ENCODE measurements at regions of chr14 and their contacts with region 1.

Region 1: DNA sequence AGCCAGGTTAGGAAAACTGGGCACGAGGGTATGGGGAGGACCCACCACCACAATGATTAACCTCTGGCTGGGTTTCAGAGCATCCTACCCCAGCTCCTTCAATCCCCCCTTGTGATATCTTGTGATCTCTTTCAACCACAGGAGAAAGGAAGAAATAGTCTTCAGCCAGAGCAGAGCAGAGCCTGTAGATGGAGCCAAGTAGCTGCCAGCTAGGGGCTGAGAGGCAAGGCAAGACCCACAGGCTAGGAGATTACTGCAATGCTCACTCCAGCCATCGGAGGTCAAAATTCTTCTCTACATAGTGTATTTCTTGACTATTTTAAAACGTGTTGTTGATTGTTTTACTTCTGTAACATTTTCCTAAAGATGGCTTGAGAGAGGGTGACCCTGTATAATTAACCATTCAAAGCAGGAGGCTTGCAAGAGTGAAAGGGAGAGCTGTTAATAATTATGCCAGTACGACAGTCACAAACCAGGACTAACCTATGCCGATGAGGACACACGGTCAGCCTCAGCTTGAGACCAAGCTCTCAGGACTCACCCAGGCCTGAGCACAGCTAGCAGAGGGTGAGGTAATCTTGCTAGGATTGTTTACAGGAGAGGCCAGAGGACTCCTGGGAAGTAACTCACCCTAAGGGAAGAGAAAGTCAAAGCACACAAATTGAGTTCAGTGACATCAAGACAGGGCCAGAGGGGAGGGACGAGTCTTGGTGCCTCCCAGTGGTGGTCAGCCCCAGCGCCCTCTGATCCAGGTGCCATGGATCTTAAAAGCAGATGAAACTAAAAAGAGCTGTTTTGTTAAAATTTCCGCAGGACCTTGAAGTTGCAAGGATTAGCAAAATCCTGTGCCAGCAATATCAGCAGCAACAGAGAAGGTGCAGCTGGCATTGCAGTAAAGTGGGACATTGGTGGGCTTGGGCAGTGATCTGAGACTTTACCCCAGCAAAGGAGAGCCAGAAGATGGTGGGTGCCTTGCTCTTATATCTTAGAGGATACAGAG is 29.8 kb upstream of the CDKN3 start:
- DNase-seq: peak; percentile 73 to 84 (median 82)
- H3K4me3 ChIP-seq: no peak overlapping the region
- H3K27ac ChIP-seq: no peak overlapping the region
- H3K4me1 ChIP-seq: peaks cover 0 to 5% (median 4%) of the 10 kb centered on the region in 4 experiments
- H3K27me3 ChIP-seq: no peaks in the 10 kb centered on the region

Region 2: GRCh38 chr14:54396493-54397335 is 29.7 kb after region 1 on chr14 and contains the start of gene CDKN3:
- CTCF ChIA-PET with region 1: interaction called, 16 read pairs
- POLR2A ChIA-PET with region 1: no interaction called
- DNase-seq: peak; percentile 99
- H3K4me3 ChIP-seq: peak within 1 kb of the TSS; percentile 68 to 94 (median 83)
- H3K27ac ChIP-seq: peak within 1 kb of the TSS; percentile 33 to 70
- H3K4me1 ChIP-seq: peaks cover 1 to 29% (median 21%) of the 10 kb centered on the region in 4 experiments
- H3K27me3 ChIP-seq: no peaks in the 10 kb centered on the region

Region 3: DNA sequence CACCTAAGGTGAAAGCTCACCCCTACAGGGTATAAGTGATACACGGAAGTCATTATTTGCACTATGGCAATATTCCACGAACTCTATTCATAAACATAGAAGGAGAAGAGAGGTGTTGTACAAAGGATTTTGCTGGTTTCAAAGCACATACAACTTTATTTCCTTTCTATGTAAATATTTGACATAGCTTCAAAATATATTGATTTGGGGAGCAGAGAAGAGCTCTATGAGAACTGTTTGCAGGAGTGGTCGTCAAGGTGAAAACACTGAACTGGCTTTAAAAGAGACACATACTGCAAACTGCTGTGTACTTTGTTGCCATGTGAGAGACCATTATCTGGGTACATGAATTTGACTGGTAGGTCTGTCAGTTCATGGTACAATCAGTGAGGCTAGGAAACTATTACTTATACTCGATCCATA is 57.5 kb after region 1 on chr14:
- CTCF ChIA-PET with region 1: interaction called, 10 read pairs
- POLR2A ChIA-PET with region 1: no interaction called
- DNase-seq: no peak
- H3K4me3 ChIP-seq: no peak overlapping the region
- H3K27ac ChIP-seq: no peak overlapping the region
- H3K4me1 ChIP-seq: no peaks in the 10 kb centered on the region
- H3K27me3 ChIP-seq: no peaks in the 10 kb centered on the region

Region 4: GRCh38 chr14:54457609-54457996 is 90.6 kb after region 1 on chr14:
- CTCF ChIA-PET with region 1: no interaction called
- POLR2A ChIA-PET with region 1: no interaction called
- DNase-seq: no peak
- H3K4me3 ChIP-seq: no peak overlapping the region
- H3K27ac ChIP-seq: no peak overlapping the region
- H3K4me1 ChIP-seq: no peaks in the 10 kb centered on the region
- H3K27me3 ChIP-seq: no peaks in the 10 kb centered on the region

Measured in common myeloid progenitor, CD34-positive (primary cell).